AG04450 (cell line): ENCODE measurements at regions of chr1 and their contacts with region 1.

Region 1: DNA sequence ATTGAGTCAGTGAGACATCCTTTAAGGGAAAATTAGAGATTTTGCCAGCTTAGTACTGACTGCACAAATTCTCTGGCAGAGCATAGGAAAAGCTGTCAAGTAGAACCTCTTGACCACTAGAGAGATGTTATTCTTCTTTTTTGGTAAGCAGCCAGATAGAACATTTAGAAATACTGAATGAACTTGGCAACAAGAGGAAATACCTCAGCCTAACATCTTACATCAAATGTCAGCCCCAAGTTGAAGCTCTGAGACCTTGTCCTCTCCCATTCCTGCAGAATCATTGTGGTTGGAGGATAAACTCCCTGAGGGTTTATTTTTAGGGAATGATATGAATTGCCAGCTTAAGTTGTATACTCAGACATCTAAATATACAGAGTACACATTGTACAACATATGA is 53.5 kb downstream of the MIGA1 start:
- DNase-seq: peak; percentile 88
- H3K4me3 ChIP-seq: no peak overlapping the region
- H3K27ac ChIP-seq: no peak overlapping the region
- H3K27me3 ChIP-seq: no peaks in the 10 kb centered on the region
- CTCF ChIP-seq: no peak

Region 2: DNA sequence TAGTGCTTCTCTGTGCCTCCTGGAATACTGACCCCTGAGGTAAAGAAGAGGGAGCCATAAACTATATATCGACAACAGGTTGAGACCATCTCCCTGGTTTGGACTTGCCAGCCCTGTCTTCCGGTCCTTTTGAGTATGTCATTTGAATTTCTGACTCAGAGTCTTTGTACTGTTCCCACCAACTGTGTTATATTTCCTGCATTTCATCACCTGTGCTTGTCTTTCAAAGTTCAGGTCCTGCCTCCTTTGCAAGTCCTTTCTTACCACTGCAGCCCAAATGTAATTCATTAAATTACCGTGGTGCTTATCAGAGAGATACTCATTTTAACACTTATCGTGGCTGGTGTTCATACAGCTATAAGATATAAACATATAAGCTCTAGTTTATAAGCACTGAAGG is 540.4 kb before region 1 on chr1:
- CTCF ChIA-PET with region 1: no interaction called
- POLR2A ChIA-PET with region 1: no interaction called
- DNase-seq: no peak
- H3K4me3 ChIP-seq: no peak overlapping the region
- H3K27ac ChIP-seq: no peak overlapping the region
- H3K27me3 ChIP-seq: no peaks in the 10 kb centered on the region
- CTCF ChIP-seq: no peak

Region 3: DNA sequence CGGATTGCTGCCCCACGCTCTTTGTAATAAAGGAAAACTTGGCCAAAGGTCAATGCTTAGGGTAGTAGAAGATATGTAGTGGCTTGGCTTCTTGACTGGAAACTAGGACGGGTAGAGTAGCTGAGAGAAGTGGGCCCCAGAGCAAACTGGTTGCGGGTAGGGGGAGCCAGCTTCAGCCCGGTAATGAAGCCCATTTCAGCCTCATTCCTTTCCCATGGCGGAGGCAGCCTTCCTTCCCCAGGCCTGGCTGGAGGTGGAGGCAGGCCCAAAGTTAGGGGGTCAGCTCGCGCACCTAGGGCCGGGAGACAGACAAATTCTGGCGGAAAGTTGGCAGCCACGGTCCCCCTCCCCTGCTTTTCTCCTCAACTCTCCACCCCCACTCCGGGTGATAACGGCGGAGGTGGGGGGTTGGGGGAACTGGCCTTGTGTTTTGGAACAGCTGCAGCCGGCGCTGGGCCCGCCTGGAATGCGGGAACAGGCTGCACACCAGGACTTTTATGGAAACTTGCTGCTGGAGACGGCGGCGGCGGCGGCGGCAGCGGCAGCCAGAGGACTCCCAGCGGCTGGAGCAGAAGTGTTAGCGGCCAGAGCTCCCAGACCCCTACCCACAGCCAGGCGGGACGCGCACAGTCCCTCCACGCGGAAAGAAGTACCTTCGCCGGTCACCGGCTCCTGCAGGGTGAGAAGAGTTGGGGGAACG is 55.3 kb after region 1 on chr1 and contains the start of gene NEXN:
- CTCF ChIA-PET with region 1: no interaction called
- POLR2A ChIA-PET with region 1: interaction called, 10 read pairs
- DNase-seq: peak; percentile 67
- H3K4me3 ChIP-seq: peak within 1 kb of the TSS; percentile 94
- H3K27ac ChIP-seq: peak within 1 kb of the TSS; percentile 100
- H3K27me3 ChIP-seq: no peaks in the 10 kb centered on the region
- CTCF ChIP-seq: peak; percentile 36
- polyA plus RNA-seq, gene NEXN: 28.6 and 39.9 TPM in 2 replicates